ENCODE measurements at regions of chr1 and their contacts with region 1.

Region 1: DNA sequence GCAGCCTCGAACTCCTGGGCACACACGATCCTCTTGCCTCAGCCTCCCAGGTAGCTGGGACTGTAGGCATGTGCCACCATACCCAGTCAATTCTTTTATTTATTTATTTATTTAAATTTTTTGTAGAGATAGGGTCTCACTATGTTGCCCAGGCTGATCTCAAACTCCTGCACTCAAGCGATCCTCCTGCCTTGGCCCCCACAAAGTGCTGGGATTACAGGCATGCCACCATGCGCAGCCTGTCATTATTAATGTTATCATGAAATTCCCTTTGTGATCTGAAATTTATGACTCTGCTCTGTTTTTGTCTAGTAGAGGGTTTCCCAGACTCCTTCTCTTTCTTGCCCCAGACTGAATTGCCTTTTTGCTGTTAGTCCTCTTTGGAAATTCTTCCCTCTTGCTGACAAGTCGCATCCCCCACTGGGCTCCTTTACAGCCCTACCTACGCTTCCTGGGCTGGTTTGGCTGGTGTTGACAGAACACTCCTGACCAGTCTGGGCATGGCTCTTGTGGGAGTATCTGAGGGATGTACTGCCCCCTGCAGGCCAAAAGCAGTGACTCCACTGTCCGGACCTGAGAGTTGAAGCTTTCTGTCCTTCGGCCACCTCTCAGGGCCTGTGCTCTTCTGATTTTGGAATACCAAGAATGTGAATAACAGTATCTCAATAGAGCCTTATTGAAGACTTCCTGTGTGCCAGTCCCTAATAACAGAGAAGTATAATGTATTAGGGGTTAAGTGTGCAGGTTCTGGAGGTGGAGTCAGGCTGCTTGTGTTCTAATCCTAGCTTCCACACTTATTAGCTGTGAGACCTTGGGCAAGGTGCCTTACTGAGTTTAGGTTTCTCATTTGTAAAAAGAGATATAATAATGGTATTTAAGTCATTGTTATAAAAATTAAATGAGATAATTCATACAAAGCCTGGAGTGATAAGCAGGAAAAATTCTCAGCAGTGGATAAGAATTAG is 28.2 kb downstream of the TCEANC2 start:
- DNase-seq: no peak
- H3K4me3 ChIP-seq: no peak overlapping the region
- CTCF ChIP-seq: peak; percentile 70

Region 2: GRCh38 chr1:54070171-54070837 is 11.3 kb before region 1 on chr1:
- CTCF ChIA-PET with region 1: interaction called, 71 read pairs
- POLR2A ChIA-PET with region 1: no interaction called
- DNase-seq: no peak
- H3K4me3 ChIP-seq: no peak overlapping the region
- CTCF ChIP-seq: peak; percentile 72

Measured in AG04449 (cell line).